IMR-90 (cell line): ENCODE measurements at regions of chr17 and their contacts with region 1.

Region 1: GRCh38 chr17:8189711-8190477 is at the start of gene BORCS6:
- DNase-seq: peak; percentile 98
- ATAC-seq: peak; percentile 49
- H3K4me3 ChIP-seq: peak within 1 kb of the TSS; percentile 74
- H3K27ac ChIP-seq: peak within 1 kb of the TSS; percentile 69
- H3K4me1 ChIP-seq: peaks cover 13% of the 10 kb centered on the region
- H3K27me3 ChIP-seq: no peaks in the 10 kb centered on the region
- CTCF ChIP-seq: no peak
- POLR2A ChIP-seq: peak; percentile 59
- RAD21 ChIP-seq: no peak
- total RNA-seq, gene BORCS6: 2.7 and 3.1 TPM in 2 replicates

Region 2: GRCh38 chr17:8125157-8125946 is 64.5 kb before region 1 on chr17:
- CTCF ChIA-PET with region 1: interaction called, 3 read pairs
- POLR2A ChIA-PET with region 1: no interaction called
- dilution Hi-C with region 1: no loop called
- in situ Hi-C with region 1: no loop called
- intact Hi-C with region 1: loop called (anchors 1 kb)
- DNase-seq: peak; percentile 60
- ATAC-seq: peak; percentile 5
- H3K4me3 ChIP-seq: peak overlapping the region; percentile 73
- H3K27ac ChIP-seq: no peak overlapping the region
- H3K4me1 ChIP-seq: peaks cover 8% of the 10 kb centered on the region
- H3K27me3 ChIP-seq: no peaks in the 10 kb centered on the region
- CTCF ChIP-seq: no peak
- POLR2A ChIP-seq: no peak
- RAD21 ChIP-seq: no peak